A549 (cell line): ENCODE measurements at regions of chr6 and their contacts with region 1.

Region 1: DNA sequence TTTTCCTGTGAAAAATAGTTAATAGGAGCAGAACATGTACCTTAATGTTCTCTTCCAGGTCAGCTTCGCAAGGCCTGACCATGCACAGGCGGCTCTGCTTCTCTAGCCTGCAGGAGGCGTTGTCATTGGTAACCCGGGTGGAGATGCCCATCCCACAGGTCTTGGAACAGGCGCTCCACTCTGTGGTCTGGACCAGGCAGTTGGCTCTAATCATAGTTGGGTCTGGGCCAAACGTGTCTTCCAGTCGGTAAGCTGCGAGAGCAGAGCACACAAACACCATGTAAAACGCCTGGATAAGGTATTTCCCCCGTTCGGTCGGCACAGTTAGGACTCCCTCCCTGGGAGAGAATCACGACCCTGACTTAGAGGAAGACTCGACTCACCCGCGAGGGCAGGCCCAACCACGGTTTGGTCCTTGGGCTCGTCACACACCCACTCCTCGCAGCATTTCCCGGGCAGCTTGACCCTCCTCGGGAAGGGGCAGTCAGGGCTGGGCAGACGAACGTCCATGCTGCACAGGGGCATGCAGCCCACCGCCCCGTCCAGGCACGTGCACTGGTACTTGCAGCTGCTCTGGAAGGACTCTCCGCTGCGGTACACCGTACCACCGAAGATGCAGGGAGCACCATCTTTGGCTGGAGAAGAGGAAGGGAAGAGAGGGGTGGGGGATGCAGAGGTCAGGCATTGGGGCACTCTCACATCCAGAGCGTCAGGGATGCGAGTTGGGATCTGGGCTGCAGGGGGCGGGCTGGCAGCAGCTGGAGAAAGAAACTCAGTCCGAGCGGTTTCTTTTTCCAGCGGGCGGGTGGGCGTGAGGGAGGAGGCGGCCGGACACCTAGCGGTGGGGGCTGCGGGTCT is 1.0 kb downstream of the CCN2 start:
- DNase-seq: peak; percentile 50 to 75
- ATAC-seq: peak; percentile 57 to 71
- H3K4me3 ChIP-seq: peak overlapping the region; percentile 90
- H3K27ac ChIP-seq: peak overlapping the region; percentile 90 to 97
- H3K4me1 ChIP-seq: peaks cover 54% of the 10 kb centered on the region
- CTCF ChIP-seq: peak; percentile 43
- EP300 ChIP-seq: no peak
- POLR2A ChIP-seq: no peak
- RAD21 ChIP-seq: peak; percentile 40 to 50

Region 2: DNA sequence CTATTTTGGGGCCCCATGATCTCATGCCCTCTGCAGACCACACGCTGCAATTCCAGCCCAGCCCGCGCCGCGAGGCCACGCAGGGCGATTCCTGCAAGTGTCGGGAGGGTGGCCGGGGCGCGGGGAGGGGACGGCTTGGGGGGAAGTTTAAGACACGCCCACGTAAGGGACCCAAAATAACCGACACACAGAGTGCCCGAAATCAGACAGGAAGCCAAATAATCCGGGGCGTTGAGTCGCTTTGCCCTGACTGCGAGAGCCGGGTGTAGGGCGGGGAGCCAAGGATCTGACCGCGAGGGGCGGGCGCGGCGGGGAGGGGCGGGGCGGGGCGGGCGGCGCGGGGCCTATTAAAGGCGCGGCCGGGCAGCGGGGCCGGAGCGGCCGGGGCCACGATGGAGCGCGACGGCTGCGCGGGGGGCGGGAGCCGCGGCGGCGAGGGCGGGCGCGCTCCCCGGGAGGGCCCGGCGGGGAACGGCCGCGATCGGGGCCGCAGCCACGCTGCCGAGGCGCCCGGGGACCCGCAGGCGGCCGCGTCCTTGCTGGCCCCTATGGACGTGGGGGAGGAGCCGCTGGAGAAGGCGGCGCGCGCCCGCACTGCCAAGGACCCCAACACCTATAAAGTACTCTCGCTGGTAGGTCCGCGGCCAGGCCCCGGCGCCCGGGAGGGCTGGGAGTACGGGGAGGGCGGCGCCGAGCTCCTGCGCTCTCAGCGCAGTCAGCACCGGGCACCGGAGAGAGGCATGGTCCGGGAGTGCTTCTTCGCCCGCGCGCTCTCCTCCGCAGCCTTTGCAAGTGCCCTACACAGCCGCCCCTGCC is 142.3 kb before region 1 on chr6 and contains the start of gene ENPP1:
- CTCF ChIA-PET with region 1: no interaction called
- POLR2A ChIA-PET with region 1: no interaction called
- DNase-seq: peak; percentile 63 to 65
- ATAC-seq: peak; percentile 95
- H3K4me3 ChIP-seq: peak within 1 kb of the TSS; percentile 73
- H3K27ac ChIP-seq: peak within 1 kb of the TSS; percentile 79 to 95
- H3K4me1 ChIP-seq: peaks cover 5% of the 10 kb centered on the region; the same call in 1 of the 3 replicates
- CTCF ChIP-seq: peak; percentile 12; the same call in 1 of the 3 replicates
- EP300 ChIP-seq: no peak
- POLR2A ChIP-seq: peak; percentile 67
- RAD21 ChIP-seq: peak in 1 of 2 experiments; percentile 39; a peak in 1 of 5 replicates
- polyA plus RNA-seq, gene ENPP1: 5.3 and 5.6 TPM in 2 replicates

Region 3: DNA sequence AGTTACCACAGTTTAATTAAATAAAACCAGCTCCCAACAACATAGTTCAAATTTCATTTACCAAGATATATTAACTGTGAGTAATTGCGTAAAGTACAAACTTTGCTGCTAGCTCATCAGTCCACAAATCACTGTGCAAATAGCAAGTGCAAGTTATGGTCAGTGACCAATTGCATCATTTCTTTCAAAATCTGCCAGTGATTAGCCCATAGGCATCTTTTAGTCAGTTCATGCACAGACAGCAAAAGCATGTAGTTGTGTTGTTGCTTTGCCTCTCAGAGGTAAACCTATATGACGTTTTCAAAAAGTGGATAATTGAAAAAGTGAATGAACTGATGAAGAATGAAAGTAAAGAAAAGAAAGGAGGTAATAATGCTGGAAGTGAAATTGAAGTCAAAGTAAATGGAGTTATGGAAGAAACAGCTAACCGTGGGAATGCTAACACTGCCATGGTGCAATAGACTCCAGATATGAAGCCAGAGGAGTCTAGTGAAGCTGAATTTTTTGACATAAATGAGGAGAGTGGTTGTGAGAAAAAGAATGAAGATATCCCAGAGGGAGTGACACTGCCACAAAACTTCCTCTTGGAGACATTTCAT is 105.8 kb before region 1 on chr6:
- CTCF ChIA-PET with region 1: no interaction called
- POLR2A ChIA-PET with region 1: no interaction called
- DNase-seq: peak in 1 of 2 experiments; percentile 35
- ATAC-seq: peak; percentile 51 to 62; a peak in 3 of 6 replicates
- H3K4me3 ChIP-seq: no peak overlapping the region
- H3K27ac ChIP-seq: peak overlapping the region; percentile 36 to 47; a peak in 1 of 6 replicates
- H3K4me1 ChIP-seq: peaks cover 14% of the 10 kb centered on the region; the same call in 2 of the 3 replicates
- CTCF ChIP-seq: no peak
- EP300 ChIP-seq: no peak
- POLR2A ChIP-seq: no peak
- RAD21 ChIP-seq: no peak

Region 4: GRCh38 chr6:131929264-131929663 is 20.9 kb before region 1 on chr6:
- CTCF ChIA-PET with region 1: interaction called, 16 read pairs
- POLR2A ChIA-PET with region 1: no interaction called
- DNase-seq: no peak
- ATAC-seq: no peak
- H3K4me3 ChIP-seq: no peak overlapping the region
- H3K27ac ChIP-seq: no peak overlapping the region
- H3K4me1 ChIP-seq: 0 out of 3 replicates have a peak, but pooled peaks cover 3% of the 10 kb centered on the region
- CTCF ChIP-seq: no peak
- EP300 ChIP-seq: no peak
- POLR2A ChIP-seq: no peak
- RAD21 ChIP-seq: no peak

Region 5: GRCh38 chr6:131937703-131938631 is 12.2 kb before region 1 on chr6:
- CTCF ChIA-PET with region 1: interaction called, 17 read pairs
- POLR2A ChIA-PET with region 1: interaction called, 13 read pairs
- DNase-seq: peak in 1 of 2 experiments; percentile 86
- ATAC-seq: peak; percentile 81 to 94
- H3K4me3 ChIP-seq: no peak overlapping the region
- H3K27ac ChIP-seq: peak overlapping the region; percentile 27 to 52; a peak in 5 of 6 replicates
- H3K4me1 ChIP-seq: peaks cover 25% of the 10 kb centered on the region
- CTCF ChIP-seq: no peak
- EP300 ChIP-seq: peak; percentile 18 to 56; a peak in 1 of 5 replicates
- POLR2A ChIP-seq: no peak
- RAD21 ChIP-seq: no peak

Region 6: GRCh38 chr6:131960371-131961133 is 10.4 kb after region 1 on chr6:
- CTCF ChIA-PET with region 1: interaction called, 22 read pairs
- POLR2A ChIA-PET with region 1: interaction called, 4 read pairs
- DNase-seq: no peak
- ATAC-seq: no peak
- H3K4me3 ChIP-seq: no peak overlapping the region
- H3K27ac ChIP-seq: no peak overlapping the region
- H3K4me1 ChIP-seq: peaks cover 15% of the 10 kb centered on the region
- CTCF ChIP-seq: no peak; the same call in 1 of the 3 replicates
- EP300 ChIP-seq: no peak
- POLR2A ChIP-seq: no peak
- RAD21 ChIP-seq: peak; percentile 44

Region 7: GRCh38 chr6:132063738-132064137 is 113.6 kb after region 1 on chr6:
- CTCF ChIA-PET with region 1: interaction called, 5 read pairs
- POLR2A ChIA-PET with region 1: interaction called, 10 read pairs
- DNase-seq: peak; percentile 17 to 73
- ATAC-seq: peak; percentile 90 to 93
- H3K4me3 ChIP-seq: no peak overlapping the region
- H3K27ac ChIP-seq: peak overlapping the region; percentile 74 to 78
- H3K4me1 ChIP-seq: peaks cover 37% of the 10 kb centered on the region
- CTCF ChIP-seq: no peak
- EP300 ChIP-seq: peak in 1 of 2 experiments; percentile 32; a peak in 1 of 5 replicates
- POLR2A ChIP-seq: no peak
- RAD21 ChIP-seq: peak in 1 of 2 experiments; percentile 20; a peak in 1 of 5 replicates

Region 8: GRCh38 chr6:132084833-132085509 is 134.8 kb after region 1 on chr6:
- CTCF ChIA-PET with region 1: interaction called, 3 read pairs
- POLR2A ChIA-PET with region 1: interaction called, 10 read pairs
- DNase-seq: peak in 1 of 2 experiments; percentile 45
- ATAC-seq: peak; percentile 66 to 81; a peak in 5 of 6 replicates
- H3K4me3 ChIP-seq: no peak overlapping the region
- H3K27ac ChIP-seq: peak overlapping the region; percentile 51 to 57; a peak in 5 of 6 replicates
- H3K4me1 ChIP-seq: peaks cover 20% of the 10 kb centered on the region
- CTCF ChIP-seq: no peak
- EP300 ChIP-seq: no peak
- POLR2A ChIP-seq: no peak
- RAD21 ChIP-seq: no peak

Region 9: GRCh38 chr6:132161283-132161682 is 211.1 kb after region 1 on chr6:
- CTCF ChIA-PET with region 1: interaction called, 17 read pairs
- POLR2A ChIA-PET with region 1: interaction called, 4 read pairs
- DNase-seq: peak; percentile 1 to 38
- ATAC-seq: peak; percentile 62 to 82; a peak in 3 of 6 replicates
- H3K4me3 ChIP-seq: no peak overlapping the region
- H3K27ac ChIP-seq: no peak overlapping the region
- H3K4me1 ChIP-seq: no peaks in the 10 kb centered on the region
- CTCF ChIP-seq: peak; percentile 66
- EP300 ChIP-seq: no peak
- POLR2A ChIP-seq: no peak
- RAD21 ChIP-seq: peak; percentile 79 to 81